Cardiac septum (tissue), 1 donor: ENCODE measurements at regions of chrX and their contacts with region 1.

Region 1: DNA sequence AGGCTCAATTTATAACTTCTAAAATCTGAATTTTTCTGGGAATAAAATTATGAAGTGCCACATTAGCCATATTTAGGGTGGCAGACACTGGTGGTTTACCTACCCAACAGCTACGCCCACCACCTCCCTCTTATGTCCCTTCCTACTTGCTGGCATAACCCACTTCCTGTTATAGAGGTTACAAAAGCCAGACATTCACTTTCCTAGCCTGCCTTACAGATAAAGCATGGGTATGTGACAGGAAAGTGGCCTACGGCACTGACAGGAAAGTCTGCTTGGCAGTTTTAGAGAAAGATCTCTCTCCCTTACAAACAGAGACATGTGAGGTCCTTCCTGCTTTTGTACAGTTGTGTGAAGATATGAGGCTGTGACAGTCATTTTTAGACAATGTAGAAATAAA is 12.4 kb downstream of the DDX53 start:
- DNase-seq: no peak

Region 2: GRCh38 chrX:22629105-22629725 is 382.9 kb before region 1 on chrX:
- intact Hi-C with region 1: loop called (anchors 5 kb)
- DNase-seq: no peak

Region 3: GRCh38 chrX:22963196-22963595 is 49.0 kb before region 1 on chrX:
- intact Hi-C with region 1: loop called (anchors 5 kb)
- DNase-seq: no peak

Region 4: DNA sequence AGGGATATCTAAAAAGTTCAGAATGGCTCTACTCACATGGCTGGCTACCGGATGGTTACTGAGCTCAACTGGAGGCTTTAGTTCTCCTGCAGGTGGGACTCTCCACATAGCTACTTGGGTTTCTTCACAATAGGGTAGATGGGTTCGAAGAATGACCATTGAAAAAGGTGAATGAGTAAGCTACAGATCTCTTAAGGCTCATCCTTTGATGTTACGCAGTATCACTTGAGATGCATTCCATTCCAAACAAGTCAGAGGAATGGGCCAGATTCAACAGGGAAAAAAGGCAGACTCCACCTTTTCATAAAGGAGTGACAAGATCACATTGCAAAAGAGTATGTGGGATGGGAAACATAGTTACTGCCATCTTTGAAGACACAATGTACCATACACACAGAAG is 40.2 kb after region 1 on chrX:
- intact Hi-C with region 1: no loop called
- DNase-seq: no peak